Natural killer cell (primary cell): ENCODE measurements at regions of chr10 and their contacts with region 1.

Region 1: GRCh38 chr10:100508691-100509150 is 10.9 kb downstream of the SEC31B start:
- DNase-seq: peak in 1 of 2 donors; percentile 85
- ATAC-seq: peak; percentile 62 to 65 (median 62)
- H3K4me3 ChIP-seq: no peak overlapping the region
- H3K4me3 Mint-ChIP-seq: peak overlapping the region; percentile 45
- H3K27ac ChIP-seq: peak overlapping the region; percentile 1
- H3K27ac Mint-ChIP-seq: peak overlapping the region in 1 of 2 donors; percentile 6
- H3K4me1 ChIP-seq: peaks cover 31% of the 10 kb centered on the region
- H3K4me1 Mint-ChIP-seq: peaks cover 44 to 48% of the 10 kb centered on the region in 2 donors
- H3K27me3 ChIP-seq: no peaks in the 10 kb centered on the region
- H3K27me3 Mint-ChIP-seq: no peaks in the 10 kb centered on the region
- CTCF ChIP-seq: peak; percentile 60

Region 2: GRCh38 chr10:100433253-100434240 is 75.2 kb before region 1 on chr10:
- intact Hi-C with region 1: loop called (anchors 1 kb)
- DNase-seq: peak; percentile 93 to 97
- ATAC-seq: peak; percentile 99 to 100 (median 100)
- H3K4me3 ChIP-seq: no peak overlapping the region
- H3K4me3 Mint-ChIP-seq: no peak overlapping the region
- H3K27ac ChIP-seq: no peak overlapping the region
- H3K27ac Mint-ChIP-seq: no peak overlapping the region
- H3K4me1 ChIP-seq: no peaks in the 10 kb centered on the region
- H3K4me1 Mint-ChIP-seq: no peaks in the 10 kb centered on the region
- H3K27me3 ChIP-seq: no peaks in the 10 kb centered on the region
- H3K27me3 Mint-ChIP-seq: no peaks in the 10 kb centered on the region
- CTCF ChIP-seq: peak; percentile 100

Region 3: DNA sequence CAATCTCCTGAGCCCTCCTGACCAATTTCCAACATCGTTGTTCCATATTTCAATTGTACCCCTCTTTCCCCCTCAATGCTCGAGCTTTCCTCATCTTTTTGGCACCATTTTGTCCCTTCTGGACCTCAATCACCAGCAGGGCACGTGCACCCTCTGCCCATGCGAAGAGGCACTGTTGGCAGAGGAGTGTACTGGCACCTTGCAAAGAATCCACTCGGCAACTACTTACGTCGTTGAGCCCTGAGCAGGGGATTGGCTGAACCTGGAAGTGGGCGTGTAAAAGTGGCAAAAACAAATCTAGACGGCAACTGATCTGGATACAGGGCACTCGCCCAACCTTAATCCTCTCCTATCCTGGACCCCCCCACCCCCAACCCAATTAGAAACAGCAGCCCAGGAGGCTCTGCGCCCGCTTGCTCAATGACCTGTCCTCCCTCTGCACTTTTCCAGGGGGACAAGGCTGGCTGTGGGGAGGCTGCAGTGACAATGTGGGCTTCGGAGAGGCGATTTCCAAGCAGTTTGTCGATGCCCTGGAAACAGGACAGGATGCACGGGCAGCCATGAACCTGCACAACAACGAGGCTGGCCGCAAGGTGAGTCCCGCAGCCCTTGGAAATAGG is 27.1 kb before region 1 on chr10:
- intact Hi-C with region 1: loop called (anchors 1 kb)
- DNase-seq: peak; percentile 95
- ATAC-seq: peak; percentile 95
- H3K4me3 ChIP-seq: peak overlapping the region; percentile 35
- H3K4me3 Mint-ChIP-seq: peak overlapping the region; percentile 86
- H3K27ac ChIP-seq: no peak overlapping the region
- H3K27ac Mint-ChIP-seq: no peak overlapping the region
- H3K4me1 ChIP-seq: peaks cover 18% of the 10 kb centered on the region
- H3K4me1 Mint-ChIP-seq: peaks cover 21% of the 10 kb centered on the region in 2 donors
- H3K27me3 ChIP-seq: peaks cover 3% of the 10 kb centered on the region
- H3K27me3 Mint-ChIP-seq: peaks cover 23 to 48% of the 10 kb centered on the region in 2 donors
- CTCF ChIP-seq: no peak